ENCODE measurements at regions of chr10 and their contacts with region 1.

Region 1: GRCh38 chr10:75401569-75402485 is at the start of gene ZNF503:
- DNase-seq: peak; percentile 97 to 99 (median 98)
- H3K4me3 ChIP-seq: peak within 1 kb of the TSS; percentile 93
- H3K27ac ChIP-seq: peak within 1 kb of the TSS; percentile 98
- H3K4me1 ChIP-seq: peaks cover 4% of the 10 kb centered on the region
- H3K27me3 ChIP-seq: no peaks in the 10 kb centered on the region
- CTCF ChIP-seq: peak; percentile 27 to 80 (median 70)
- EP300 ChIP-seq: peak; percentile 50
- POLR2A ChIP-seq: peak; percentile 94
- total RNA-seq, gene ZNF503: 33.4 to 221 (median 82.2) TPM

Region 2: DNA sequence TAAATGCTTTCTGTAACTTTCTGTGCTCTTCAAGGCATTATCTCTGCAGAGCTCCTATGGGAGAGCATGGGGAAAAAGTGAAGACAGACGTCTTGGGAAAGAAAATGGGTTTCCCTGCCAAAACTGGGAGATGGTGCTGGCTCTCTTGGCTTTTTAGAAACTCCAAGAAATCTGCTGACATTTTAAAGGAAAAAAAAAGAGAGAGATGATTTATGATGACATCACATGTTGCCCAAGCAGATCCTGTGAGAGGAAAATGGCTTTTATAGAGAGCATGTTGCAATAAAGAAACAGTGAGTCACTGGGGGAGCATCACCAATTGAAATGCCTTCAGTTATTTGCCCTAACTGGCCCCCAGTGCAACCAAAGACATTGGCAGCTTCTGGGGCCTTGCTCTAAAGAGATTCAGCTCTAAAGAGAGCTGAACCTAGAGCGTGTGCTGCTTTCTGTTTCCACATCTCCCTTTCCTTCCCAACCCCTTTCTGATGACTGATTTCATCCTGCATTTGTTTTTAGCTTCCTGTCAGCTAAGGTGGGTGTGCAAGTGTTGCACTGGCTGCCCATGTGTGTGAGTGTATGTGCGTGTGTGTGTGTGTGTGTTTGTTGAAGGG is 67.3 kb after region 1 on chr10:
- intact Hi-C with region 1: loop called in 1 of 4 experiments (anchors 2 kb)
- DNase-seq: peak in 3 of 5 donors; percentile 62 to 79 (median 63)
- H3K4me3 ChIP-seq: no peak overlapping the region
- H3K27ac ChIP-seq: peak overlapping the region in 1 of 2 donors; percentile 51
- H3K4me1 ChIP-seq: peaks cover 11% of the 10 kb centered on the region
- H3K27me3 ChIP-seq: no peaks in the 10 kb centered on the region
- CTCF ChIP-seq: no peak
- EP300 ChIP-seq: peak; percentile 63
- POLR2A ChIP-seq: no peak

Region 3: DNA sequence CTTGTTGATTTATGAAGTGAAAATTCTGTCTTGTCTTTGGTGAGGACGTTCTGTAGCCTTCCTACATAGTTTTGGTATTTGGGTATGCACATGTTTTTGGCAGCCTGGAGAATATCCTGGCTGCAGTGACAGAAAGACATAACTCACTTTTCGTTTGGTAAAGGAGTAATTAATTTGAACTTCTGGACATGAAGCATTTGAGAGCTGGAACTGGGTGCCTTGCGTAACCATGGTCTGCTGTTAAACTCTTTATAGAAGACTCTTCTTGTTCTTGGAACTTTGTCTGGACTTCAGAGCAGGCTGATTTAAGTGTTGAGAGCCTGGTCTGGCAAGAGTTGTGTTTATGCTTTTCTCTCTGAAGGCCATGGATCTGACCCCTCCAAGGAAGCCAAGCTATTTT is 260.9 kb after region 1 on chr10:
- intact Hi-C with region 1: loop called (anchors 5 to 10 kb)
- DNase-seq: peak in 4 of 5 donors; percentile 35 to 79 (median 68)
- H3K4me3 ChIP-seq: no peak overlapping the region
- H3K27ac ChIP-seq: peak overlapping the region in 1 of 2 donors; percentile 70
- H3K4me1 ChIP-seq: peaks cover 17% of the 10 kb centered on the region
- H3K27me3 ChIP-seq: no peaks in the 10 kb centered on the region
- CTCF ChIP-seq: no peak
- EP300 ChIP-seq: no peak
- POLR2A ChIP-seq: no peak

Region 4: DNA sequence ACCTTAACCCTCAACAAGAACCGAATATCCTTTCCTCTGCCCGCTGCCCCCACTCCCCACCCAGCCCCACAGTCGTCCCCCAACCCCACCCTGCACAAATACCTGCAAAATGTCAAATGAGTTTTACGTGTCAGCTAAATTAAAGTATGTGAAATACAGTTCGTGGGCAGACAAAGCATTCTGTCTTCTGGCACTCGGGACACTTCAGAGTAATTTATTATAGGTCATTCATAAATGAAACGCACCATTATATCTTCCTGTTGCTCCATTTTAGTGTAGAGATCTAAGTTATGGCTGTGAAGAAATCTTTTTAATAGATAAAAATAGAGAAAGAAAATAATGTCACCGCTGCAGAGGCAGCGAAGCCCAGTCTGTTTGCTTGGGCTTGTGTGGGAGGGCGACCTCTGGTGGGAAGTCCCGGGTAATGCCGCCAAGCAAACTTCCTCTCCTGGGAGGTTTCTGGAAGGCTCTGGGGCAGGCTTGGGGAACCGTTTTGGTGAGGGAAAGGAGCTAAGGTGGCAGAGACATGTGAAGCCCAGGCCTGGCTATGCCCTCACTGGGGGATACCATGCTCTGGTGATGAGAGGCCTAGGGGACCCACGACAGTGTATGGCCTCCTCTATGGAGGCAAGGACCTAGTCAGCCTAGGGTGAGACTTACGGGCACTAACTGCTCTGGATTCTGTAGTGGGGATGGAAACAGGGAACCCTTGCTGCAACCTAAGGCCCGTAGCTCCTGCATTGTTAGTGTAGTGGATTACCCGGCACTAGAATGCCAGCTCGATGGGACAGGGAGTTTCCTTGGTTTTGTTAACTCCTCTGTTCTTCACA is 634.5 kb after region 1 on chr10:
- intact Hi-C with region 1: loop called (anchors 2 to 5 kb)
- DNase-seq: peak; percentile 74 to 87 (median 86)
- H3K4me3 ChIP-seq: no peak overlapping the region
- H3K27ac ChIP-seq: no peak overlapping the region
- H3K4me1 ChIP-seq: peaks cover 6% of the 10 kb centered on the region
- H3K27me3 ChIP-seq: no peaks in the 10 kb centered on the region
- CTCF ChIP-seq: peak; percentile 75 to 89 (median 76)
- EP300 ChIP-seq: no peak
- POLR2A ChIP-seq: no peak

Region 5: DNA sequence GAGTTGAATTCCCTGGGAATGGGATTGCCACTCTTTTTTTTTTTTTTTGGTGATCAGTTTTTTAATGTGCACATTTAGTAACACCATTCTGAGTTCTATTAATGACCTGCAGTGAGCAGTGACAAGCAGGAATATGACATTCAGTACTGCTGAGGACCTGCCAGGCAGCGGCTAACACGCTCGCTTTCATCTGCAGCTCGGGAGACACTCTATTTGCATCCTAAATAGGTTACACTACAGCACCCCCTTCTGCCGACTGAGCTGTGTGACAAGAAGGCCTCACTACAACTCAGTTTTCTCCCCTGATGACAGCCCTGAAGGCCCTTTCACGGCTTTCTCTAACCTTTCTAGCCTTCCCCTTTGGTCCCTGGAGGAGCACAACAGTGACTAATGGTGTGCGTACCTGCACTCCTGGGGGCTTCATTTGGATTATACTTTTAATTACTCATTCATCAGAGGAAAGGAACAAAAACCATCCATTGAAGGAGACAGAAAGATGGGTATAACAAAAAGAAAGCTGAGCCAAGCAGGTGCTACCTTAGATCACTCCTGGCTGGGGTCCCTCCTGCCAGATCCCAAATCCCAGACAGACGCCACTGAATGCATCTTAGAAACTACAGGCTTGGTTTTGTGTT is 902.0 kb after region 1 on chr10:
- intact Hi-C with region 1: loop called in 2 of 4 experiments (anchors 5 kb)
- DNase-seq: peak; percentile 66 to 83 (median 77)
- H3K4me3 ChIP-seq: no peak overlapping the region
- H3K27ac ChIP-seq: no peak overlapping the region
- H3K4me1 ChIP-seq: peaks cover 5% of the 10 kb centered on the region
- H3K27me3 ChIP-seq: no peaks in the 10 kb centered on the region
- CTCF ChIP-seq: peak; percentile 9 to 52 (median 40)
- EP300 ChIP-seq: no peak
- POLR2A ChIP-seq: no peak

Region 6: GRCh38 chr10:76882245-76882644 is 1480.4 kb after region 1 on chr10:
- intact Hi-C with region 1: no loop called
- DNase-seq: no peak
- H3K4me3 ChIP-seq: no peak overlapping the region
- H3K27ac ChIP-seq: no peak overlapping the region
- H3K4me1 ChIP-seq: no peaks in the 10 kb centered on the region
- H3K27me3 ChIP-seq: no peaks in the 10 kb centered on the region
- CTCF ChIP-seq: no peak
- EP300 ChIP-seq: no peak
- POLR2A ChIP-seq: no peak

Region 7: GRCh38 chr10:76991621-76992020 is 1589.8 kb after region 1 on chr10:
- intact Hi-C with region 1: loop called in 1 of 4 experiments (anchors 5 kb)
- DNase-seq: peak in 2 of 5 donors; percentile 8 to 34
- H3K4me3 ChIP-seq: no peak overlapping the region
- H3K27ac ChIP-seq: no peak overlapping the region
- H3K4me1 ChIP-seq: peaks cover 6% of the 10 kb centered on the region
- H3K27me3 ChIP-seq: no peaks in the 10 kb centered on the region
- CTCF ChIP-seq: no peak
- EP300 ChIP-seq: no peak
- POLR2A ChIP-seq: no peak

Region 8: DNA sequence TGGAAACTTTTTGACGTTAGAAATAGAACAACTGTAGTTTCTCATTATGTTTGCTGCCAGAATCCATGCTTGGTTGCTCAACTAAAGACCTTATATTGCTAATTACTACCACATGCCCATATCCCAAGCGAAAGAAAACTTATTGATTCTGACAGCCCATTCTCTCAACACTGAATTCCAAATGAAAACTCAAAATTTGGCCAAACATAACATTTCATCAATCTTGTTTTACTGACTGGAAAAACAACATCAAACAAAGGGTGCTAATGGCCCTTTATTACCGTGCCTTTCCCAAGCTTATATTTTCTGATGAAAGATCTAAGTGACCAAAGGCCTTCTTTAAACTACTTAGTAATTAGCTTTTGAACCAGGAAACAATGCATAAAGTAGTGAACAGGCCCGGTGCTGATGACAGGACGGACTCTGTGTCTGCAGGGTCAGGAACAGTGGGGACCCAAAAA is 1704.0 kb after region 1 on chr10:
- intact Hi-C with region 1: loop called in 1 of 4 experiments (anchors 5 kb)
- DNase-seq: no peak
- H3K4me3 ChIP-seq: no peak overlapping the region
- H3K27ac ChIP-seq: no peak overlapping the region
- H3K4me1 ChIP-seq: peaks cover 8% of the 10 kb centered on the region
- H3K27me3 ChIP-seq: no peaks in the 10 kb centered on the region
- CTCF ChIP-seq: no peak
- EP300 ChIP-seq: no peak
- POLR2A ChIP-seq: no peak